ENCODE measurements at regions of chr1 and their contacts with region 1.

Region 1: DNA sequence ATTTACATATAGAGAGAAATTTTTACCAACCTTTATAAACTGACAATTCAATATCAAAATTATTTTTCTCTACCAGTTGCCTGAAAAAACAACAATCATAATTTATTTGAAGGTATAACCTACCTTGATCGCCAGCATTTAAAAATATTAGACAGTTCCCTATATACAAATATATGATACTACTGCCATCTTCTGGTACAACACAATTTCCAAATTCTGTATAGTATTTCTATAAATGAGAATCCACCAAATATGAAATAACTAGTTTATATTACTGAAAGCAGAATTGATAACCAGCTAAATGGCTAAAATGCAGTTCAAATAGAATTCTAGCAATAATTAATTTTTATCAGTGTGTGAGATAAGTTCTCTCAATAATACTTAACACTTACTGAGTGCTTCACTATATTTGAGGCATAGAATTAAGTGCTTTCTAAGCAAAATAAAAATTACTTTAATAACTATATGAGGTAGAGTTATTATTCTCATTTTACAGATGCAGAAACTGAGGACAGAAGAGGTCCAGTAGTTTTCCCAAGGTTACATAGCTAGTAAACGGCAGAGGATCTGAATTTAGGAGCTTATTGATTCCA is 75.6 kb downstream of the PIGK start:
- DNase-seq: no peak
- ATAC-seq: 0 out of 3 replicates have a peak, but pooled peaks have one; percentile 34
- H3K4me3 ChIP-seq: no peak overlapping the region
- H3K27ac ChIP-seq: no peak overlapping the region
- H3K4me1 ChIP-seq: no peaks in the 10 kb centered on the region
- H3K27me3 ChIP-seq: no peaks in the 10 kb centered on the region
- CTCF ChIP-seq: peak in 1 of 3 experiments; percentile 17; a peak in 2 of 6 replicates
- EP300 ChIP-seq: no peak
- POLR2A ChIP-seq: no peak
- RAD21 ChIP-seq: peak; percentile 34; the same call in 1 of the 2 replicates

Region 2: GRCh38 chr1:75908717-75909152 is 1234.9 kb before region 1 on chr1:
- CTCF ChIA-PET with region 1: interaction called, 12 read pairs
- POLR2A ChIA-PET with region 1: no interaction called
- RAD21 ChIA-PET with region 1: interaction called, 5 read pairs
- SMC1A ChIA-PET with region 1: interaction called, 4 read pairs
- in situ Hi-C with region 1: loop called (anchors 25 kb)
- intact Hi-C with region 1: loop called (anchors 5 kb)
- DNase-seq: peak; percentile 7
- ATAC-seq: peak; percentile 99
- H3K4me3 ChIP-seq: no peak overlapping the region
- H3K27ac ChIP-seq: no peak overlapping the region
- H3K4me1 ChIP-seq: no peaks in the 10 kb centered on the region
- H3K27me3 ChIP-seq: no peaks in the 10 kb centered on the region
- CTCF ChIP-seq: peak; percentile 45 to 69 (median 53); a peak in 4 of 6 replicates
- EP300 ChIP-seq: no peak
- POLR2A ChIP-seq: no peak
- RAD21 ChIP-seq: peak; percentile 94

Region 3: GRCh38 chr1:76330991-76331603 is 812.5 kb before region 1 on chr1:
- CTCF ChIA-PET with region 1: interaction called, 5 read pairs
- POLR2A ChIA-PET with region 1: no interaction called
- RAD21 ChIA-PET with region 1: interaction called, 5 read pairs
- SMC1A ChIA-PET with region 1: interaction called, 5 read pairs
- in situ Hi-C with region 1: loop called (anchors 10 kb)
- intact Hi-C with region 1: loop called (anchors 5 kb)
- DNase-seq: no peak
- ATAC-seq: peak; percentile 90
- H3K4me3 ChIP-seq: no peak overlapping the region
- H3K27ac ChIP-seq: no peak overlapping the region
- H3K4me1 ChIP-seq: no peaks in the 10 kb centered on the region
- H3K27me3 ChIP-seq: no peaks in the 10 kb centered on the region
- CTCF ChIP-seq: peak; percentile 83 to 89 (median 89)
- EP300 ChIP-seq: no peak
- POLR2A ChIP-seq: no peak
- RAD21 ChIP-seq: peak; percentile 85

Region 4: DNA sequence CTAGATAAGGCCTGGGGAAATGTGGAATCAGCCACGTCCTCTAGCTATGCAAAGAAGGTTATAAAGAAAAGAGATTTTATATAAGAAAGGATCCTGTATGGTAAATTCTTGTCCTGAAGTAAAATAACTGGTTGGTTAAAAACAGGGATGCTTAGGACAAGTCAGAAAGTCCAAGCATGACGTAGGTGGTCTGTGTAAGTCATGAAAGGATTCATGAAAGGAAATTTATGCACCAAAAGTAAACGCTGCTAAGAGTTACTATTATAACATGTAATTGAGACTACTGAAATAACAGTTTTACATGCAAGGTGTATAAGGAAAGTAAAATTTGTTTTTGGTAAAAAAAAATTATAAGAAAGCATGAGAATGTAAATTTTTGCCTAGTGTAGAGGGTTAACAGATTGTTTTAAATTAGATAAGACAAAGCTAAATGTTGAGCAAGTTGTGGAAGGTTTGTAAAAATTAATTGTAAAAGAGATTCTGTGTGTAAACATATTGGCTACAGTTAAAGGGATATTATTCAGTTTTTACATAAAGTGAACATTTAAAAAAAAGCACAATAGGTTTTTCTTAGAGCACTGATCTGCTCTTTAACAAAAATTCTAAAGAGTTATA is 31.7 kb after region 1 on chr1:
- CTCF ChIA-PET with region 1: no interaction called
- POLR2A ChIA-PET with region 1: no interaction called
- RAD21 ChIA-PET with region 1: no interaction called
- SMC1A ChIA-PET with region 1: no interaction called
- in situ Hi-C with region 1: no loop called
- intact Hi-C with region 1: no loop called
- DNase-seq: no peak
- ATAC-seq: no peak
- H3K4me3 ChIP-seq: no peak overlapping the region
- H3K27ac ChIP-seq: no peak overlapping the region
- H3K4me1 ChIP-seq: no peaks in the 10 kb centered on the region
- H3K27me3 ChIP-seq: no peaks in the 10 kb centered on the region
- CTCF ChIP-seq: no peak
- EP300 ChIP-seq: no peak
- POLR2A ChIP-seq: no peak
- RAD21 ChIP-seq: no peak

Region 5: DNA sequence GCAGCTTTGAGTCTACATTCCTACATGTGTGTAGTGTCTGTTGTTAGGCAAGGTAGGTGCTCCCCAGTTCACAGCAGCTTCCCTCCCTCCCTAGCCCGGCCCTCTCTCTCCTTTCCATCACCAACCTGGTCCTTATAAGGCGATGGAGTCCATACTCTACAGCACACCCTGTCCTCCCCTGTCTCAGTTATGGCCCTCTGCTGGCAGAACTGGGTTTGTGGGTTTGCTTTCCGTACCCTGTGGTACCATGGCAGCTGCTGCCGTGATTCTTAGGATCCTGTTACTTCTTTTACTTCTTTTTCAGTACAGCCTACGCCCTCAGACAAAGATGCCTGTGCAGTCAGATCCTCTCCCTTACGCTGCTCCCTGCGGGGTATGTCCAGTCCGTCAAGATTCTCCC is 169.9 kb after region 1 on chr1:
- CTCF ChIA-PET with region 1: no interaction called
- POLR2A ChIA-PET with region 1: no interaction called
- RAD21 ChIA-PET with region 1: no interaction called
- SMC1A ChIA-PET with region 1: no interaction called
- in situ Hi-C with region 1: no loop called
- intact Hi-C with region 1: loop called (anchors 5 kb)
- DNase-seq: no peak
- ATAC-seq: peak; percentile 89
- H3K4me3 ChIP-seq: no peak overlapping the region
- H3K27ac ChIP-seq: no peak overlapping the region
- H3K4me1 ChIP-seq: no peaks in the 10 kb centered on the region
- H3K27me3 ChIP-seq: no peaks in the 10 kb centered on the region; a peak in 1 of 4 replicates
- CTCF ChIP-seq: peak in 2 of 3 experiments; percentile 22 to 36; a peak in 3 of 6 replicates
- EP300 ChIP-seq: no peak
- POLR2A ChIP-seq: no peak
- RAD21 ChIP-seq: no peak; the same call in 1 of the 2 replicates

Region 6: DNA sequence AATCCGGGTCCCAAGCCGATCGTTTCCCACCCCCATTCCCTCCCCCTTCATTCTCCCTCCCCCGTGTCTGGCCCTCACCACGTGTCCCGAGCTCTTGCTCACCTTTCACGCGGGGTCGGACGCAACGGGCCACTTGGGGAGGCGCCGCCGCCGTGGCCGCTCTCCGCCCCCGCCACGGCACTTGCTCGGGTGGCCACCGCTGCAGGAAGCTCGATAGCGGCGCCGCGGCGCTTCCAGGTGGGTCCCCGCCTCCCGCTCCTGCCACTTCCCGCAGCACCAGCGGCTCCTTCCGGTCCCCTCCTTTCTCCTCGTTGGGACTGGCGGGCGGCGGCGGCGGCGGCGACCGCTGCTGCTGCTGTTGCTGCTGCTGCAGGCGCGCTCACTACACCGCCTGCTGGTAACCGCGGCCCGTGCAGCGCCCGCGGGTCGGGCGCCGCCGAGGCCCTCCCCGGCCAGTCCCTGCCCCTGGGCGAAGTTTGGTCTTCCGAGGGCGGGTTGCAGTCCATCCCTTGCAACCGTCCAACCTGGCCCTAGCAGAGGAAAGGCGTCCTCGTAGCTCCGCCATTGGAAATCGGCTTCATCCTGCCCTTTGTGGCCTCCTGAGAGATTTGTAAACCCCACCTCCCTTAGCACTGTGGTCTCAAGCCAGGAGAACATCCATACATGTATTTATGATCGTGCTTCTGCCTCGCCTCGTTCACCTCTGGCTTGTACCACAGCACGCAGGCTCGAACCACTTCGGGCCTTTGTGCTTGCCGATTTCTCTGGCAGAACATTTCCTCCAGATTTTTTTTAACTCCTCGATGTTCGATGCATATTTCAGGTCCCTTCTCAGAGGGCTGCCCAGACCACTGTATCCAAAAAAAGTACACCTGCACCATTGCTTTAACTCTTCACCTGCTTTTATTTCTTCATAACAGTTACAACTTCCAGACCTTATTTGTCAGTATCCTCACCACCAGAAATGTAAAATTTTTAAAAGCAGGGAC is 539.8 kb after region 1 on chr1:
- CTCF ChIA-PET with region 1: no interaction called
- POLR2A ChIA-PET with region 1: no interaction called
- RAD21 ChIA-PET with region 1: interaction called, 3 read pairs
- SMC1A ChIA-PET with region 1: no interaction called
- in situ Hi-C with region 1: no loop called
- intact Hi-C with region 1: loop called (anchors 10 kb)
- DNase-seq: peak; percentile 45
- ATAC-seq: peak; percentile 84
- H3K4me3 ChIP-seq: peak overlapping the region; percentile 71
- H3K27ac ChIP-seq: peak overlapping the region; percentile 88
- H3K4me1 ChIP-seq: 0 out of 2 replicates have a peak, but pooled peaks cover 3% of the 10 kb centered on the region
- H3K27me3 ChIP-seq: no peaks in the 10 kb centered on the region
- CTCF ChIP-seq: peak; percentile 77 to 84 (median 80); a peak in 5 of 6 replicates
- EP300 ChIP-seq: no peak
- POLR2A ChIP-seq: peak; percentile 89
- RAD21 ChIP-seq: peak; percentile 47

Region 7: DNA sequence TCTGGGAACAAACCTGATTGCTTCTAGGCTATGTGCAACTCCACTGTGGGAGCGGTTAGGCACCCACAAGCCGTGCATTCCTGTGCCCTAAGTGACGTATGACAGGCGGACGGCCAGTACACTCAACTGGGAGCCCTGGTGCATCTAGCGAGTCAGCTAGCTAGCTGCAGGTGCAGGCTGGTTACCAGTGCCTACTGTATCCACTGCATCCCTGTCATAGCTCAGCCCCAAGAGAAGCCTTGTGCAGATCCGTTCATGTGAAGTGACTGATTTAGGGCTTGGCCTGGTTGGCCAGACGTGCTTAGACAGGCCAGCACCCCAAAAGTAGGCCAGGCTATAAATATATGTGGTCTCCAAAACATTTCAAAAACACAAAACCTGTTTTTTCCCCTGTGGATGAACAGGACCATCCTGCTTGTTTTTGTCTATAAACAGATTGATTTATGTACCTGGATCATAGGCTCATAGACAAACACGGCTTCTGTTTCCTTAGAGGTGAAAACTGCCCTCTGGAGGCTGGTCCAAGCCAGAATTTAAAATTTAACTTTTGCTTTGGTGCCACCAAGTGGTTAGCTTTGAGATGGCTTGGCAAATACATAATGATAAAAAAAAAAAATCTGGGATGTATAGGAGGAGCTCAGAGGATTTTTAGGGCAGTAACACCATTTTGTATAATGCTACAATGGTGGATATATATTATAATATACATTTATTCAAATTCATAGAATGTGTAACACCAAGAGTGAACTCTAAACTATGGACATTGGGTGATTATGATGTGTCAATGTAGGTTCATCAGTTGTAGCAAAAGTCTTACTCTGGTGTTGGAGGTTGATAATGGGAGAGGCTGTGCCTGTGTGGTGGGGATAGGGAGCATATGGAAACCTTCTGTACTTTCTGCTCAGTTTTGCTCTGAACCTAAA is 970.7 kb after region 1 on chr1:
- CTCF ChIA-PET with region 1: interaction called, 3 read pairs
- POLR2A ChIA-PET with region 1: no interaction called
- RAD21 ChIA-PET with region 1: interaction called, 4 read pairs
- SMC1A ChIA-PET with region 1: no interaction called
- in situ Hi-C with region 1: loop called (anchors 5 kb)
- intact Hi-C with region 1: loop called (anchors 2 kb)
- DNase-seq: peak; percentile 38
- ATAC-seq: peak; percentile 93
- H3K4me3 ChIP-seq: no peak overlapping the region
- H3K27ac ChIP-seq: no peak overlapping the region
- H3K4me1 ChIP-seq: peaks cover 6% of the 10 kb centered on the region
- H3K27me3 ChIP-seq: no peaks in the 10 kb centered on the region
- CTCF ChIP-seq: peak; percentile 67 to 100 (median 86); a peak in 5 of 6 replicates
- EP300 ChIP-seq: no peak
- POLR2A ChIP-seq: no peak
- RAD21 ChIP-seq: peak; percentile 99

Measured in GM12878 (cell line).